Natural killer cell (primary cell): ENCODE measurements at regions of chr7 and their contacts with region 1.

Region 1: GRCh38 chr7:144812379-144813283 is 23.2 kb downstream of the TPK1 start:
- DNase-seq: peak in 1 of 2 donors; percentile 80
- ATAC-seq: peak; percentile 53 to 81 (median 79)
- H3K4me3 ChIP-seq: peak overlapping the region; percentile 16
- H3K4me3 Mint-ChIP-seq: peak overlapping the region; percentile 82
- H3K27ac ChIP-seq: peak overlapping the region; percentile 70
- H3K27ac Mint-ChIP-seq: peak overlapping the region; percentile 85 to 89
- H3K4me1 ChIP-seq: peaks cover 4% of the 10 kb centered on the region
- H3K4me1 Mint-ChIP-seq: peaks cover 27 to 39% of the 10 kb centered on the region in 2 donors
- H3K27me3 ChIP-seq: no peaks in the 10 kb centered on the region
- H3K27me3 Mint-ChIP-seq: no peaks in the 10 kb centered on the region
- CTCF ChIP-seq: no peak

Region 2: GRCh38 chr7:144747936-144748335 is 64.7 kb before region 1 on chr7:
- intact Hi-C with region 1: no loop called
- DNase-seq: no peak
- ATAC-seq: no peak
- H3K4me3 ChIP-seq: no peak overlapping the region
- H3K4me3 Mint-ChIP-seq: no peak overlapping the region
- H3K27ac ChIP-seq: no peak overlapping the region
- H3K27ac Mint-ChIP-seq: no peak overlapping the region
- H3K4me1 ChIP-seq: no peaks in the 10 kb centered on the region
- H3K4me1 Mint-ChIP-seq: no peaks in the 10 kb centered on the region
- H3K27me3 ChIP-seq: no peaks in the 10 kb centered on the region
- H3K27me3 Mint-ChIP-seq: no peaks in the 10 kb centered on the region
- CTCF ChIP-seq: no peak

Region 3: DNA sequence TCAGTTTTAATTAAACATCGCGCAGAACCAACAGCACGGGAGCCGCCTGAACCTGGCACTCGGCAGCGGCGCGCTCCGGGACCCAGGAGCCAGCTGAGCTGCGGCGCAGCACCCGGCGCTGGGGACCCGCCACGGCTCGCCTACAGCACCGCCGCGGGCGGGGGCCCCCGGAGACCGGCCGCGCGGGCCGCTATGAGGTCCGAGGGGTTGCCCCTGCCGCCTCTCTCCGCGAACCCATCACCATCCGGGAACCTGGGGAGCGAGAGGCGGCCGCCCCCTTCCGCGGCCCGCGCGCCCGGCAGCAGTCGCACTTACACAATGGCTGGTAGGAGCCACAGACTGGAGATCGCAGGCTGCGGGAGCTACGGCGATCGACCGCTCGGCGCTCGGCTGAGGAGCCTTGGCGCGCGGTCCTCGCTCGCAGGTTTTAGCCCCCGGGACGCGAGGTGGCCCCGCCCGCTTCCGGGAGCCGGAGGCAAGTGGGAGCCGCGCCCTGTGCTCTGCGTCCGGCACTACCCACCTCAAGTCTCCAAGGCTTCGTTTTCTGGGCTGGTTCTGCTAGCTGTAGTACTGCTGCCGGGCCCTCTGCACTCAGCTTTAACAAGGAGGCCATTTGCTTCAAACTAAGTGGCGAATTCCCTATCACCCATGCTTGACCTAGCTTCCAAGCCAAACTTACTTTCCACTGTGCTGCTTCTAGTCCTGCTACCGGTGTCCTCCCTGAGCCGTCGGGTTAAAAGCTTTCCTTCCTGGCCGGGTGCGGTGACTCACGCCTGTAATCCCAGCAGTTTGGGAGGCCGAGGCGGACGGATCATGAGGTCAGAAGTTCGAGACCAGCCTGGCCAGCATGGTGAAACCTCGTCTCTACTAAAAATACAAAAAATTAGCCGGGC is 23.3 kb after region 1 on chr7 and contains the start of gene TPK1:
- intact Hi-C with region 1: loop called (anchors 2 kb)
- DNase-seq: peak; percentile 87 to 96
- ATAC-seq: peak; percentile 88 to 98 (median 91)
- H3K4me3 ChIP-seq: peak within 1 kb of the TSS; percentile 93
- H3K4me3 Mint-ChIP-seq: peak within 1 kb of the TSS; percentile 96
- H3K27ac ChIP-seq: peak within 1 kb of the TSS; percentile 96
- H3K27ac Mint-ChIP-seq: peak within 1 kb of the TSS; percentile 90 to 93
- H3K4me1 ChIP-seq: peaks cover 18% of the 10 kb centered on the region
- H3K4me1 Mint-ChIP-seq: peaks cover 27 to 41% of the 10 kb centered on the region in 2 donors
- H3K27me3 ChIP-seq: no peaks in the 10 kb centered on the region
- H3K27me3 Mint-ChIP-seq: no peaks in the 10 kb centered on the region
- CTCF ChIP-seq: no peak
- total RNA-seq, gene TPK1: 20.9 to 28.6 (median 25.3) TPM

Region 4: DNA sequence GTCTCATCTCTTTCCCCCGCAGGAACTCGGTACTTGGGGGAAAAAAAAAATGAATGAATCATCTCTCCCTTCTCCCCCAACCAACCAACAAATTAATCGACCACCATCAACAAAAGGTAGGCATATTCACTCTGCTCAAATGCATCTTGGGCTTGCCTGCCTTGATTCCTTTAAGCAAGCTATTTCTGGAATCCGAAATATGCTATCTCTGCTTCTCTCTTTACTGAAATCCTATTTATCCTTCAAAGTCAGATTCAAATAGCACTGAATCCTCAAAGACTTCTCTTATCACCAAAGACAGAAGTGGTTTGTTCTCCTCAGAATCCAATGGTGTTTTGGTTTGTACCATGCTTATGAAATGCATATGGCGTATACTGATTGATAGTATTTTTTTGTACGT is 72.8 kb after region 1 on chr7:
- intact Hi-C with region 1: no loop called
- DNase-seq: no peak
- ATAC-seq: no peak
- H3K4me3 ChIP-seq: no peak overlapping the region
- H3K4me3 Mint-ChIP-seq: no peak overlapping the region
- H3K27ac ChIP-seq: no peak overlapping the region
- H3K27ac Mint-ChIP-seq: no peak overlapping the region
- H3K4me1 ChIP-seq: no peaks in the 10 kb centered on the region
- H3K4me1 Mint-ChIP-seq: no peaks in the 10 kb centered on the region
- H3K27me3 ChIP-seq: no peaks in the 10 kb centered on the region
- H3K27me3 Mint-ChIP-seq: peaks cover 3 to 5% of the 10 kb centered on the region in 2 donors
- CTCF ChIP-seq: no peak